ENCODE measurements at regions of chr7 and their contacts with region 1.

Region 1: DNA sequence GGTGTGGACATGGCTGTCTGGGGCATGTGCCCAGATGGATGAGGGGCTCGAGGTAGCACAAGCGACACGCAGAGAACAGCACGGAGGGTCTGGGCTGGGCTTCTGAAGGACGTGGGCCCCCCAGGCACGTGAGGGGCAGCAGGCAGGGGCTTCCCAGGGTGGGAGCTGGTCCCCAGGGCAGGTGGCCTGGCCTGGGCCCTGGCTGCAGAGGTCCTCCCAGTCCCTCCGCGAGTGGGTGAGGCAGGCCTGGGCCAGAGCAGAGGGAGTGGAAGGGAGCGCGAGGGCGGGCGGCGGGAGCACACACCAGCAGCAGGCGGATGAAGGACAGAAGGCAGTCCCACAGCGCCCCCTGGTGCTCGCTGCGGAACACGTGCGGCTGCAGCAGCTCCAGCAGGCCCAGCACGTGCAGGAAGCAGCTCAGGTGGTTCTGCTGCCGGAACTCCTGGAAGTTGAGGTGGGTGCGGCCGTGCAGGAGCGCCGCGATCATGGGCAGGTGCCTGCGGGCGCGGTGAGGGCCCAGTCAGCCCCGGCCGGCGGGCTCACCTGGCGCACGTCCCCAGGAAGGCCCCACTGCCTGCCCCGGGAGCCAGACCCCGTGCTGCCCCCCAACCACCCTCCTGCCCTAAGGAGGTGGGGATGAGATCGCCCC is 14.7 kb upstream of the MICALL2 start:
- DNase-seq: peak; percentile 64
- H3K4me3 ChIP-seq: no peak overlapping the region
- H3K27ac ChIP-seq: no peak overlapping the region
- H3K4me1 ChIP-seq: no peaks in the 10 kb centered on the region
- H3K27me3 ChIP-seq: no peaks in the 10 kb centered on the region
- CTCF ChIP-seq: peak; percentile 91 to 97
- POLR2A ChIP-seq: no peak

Region 2: DNA sequence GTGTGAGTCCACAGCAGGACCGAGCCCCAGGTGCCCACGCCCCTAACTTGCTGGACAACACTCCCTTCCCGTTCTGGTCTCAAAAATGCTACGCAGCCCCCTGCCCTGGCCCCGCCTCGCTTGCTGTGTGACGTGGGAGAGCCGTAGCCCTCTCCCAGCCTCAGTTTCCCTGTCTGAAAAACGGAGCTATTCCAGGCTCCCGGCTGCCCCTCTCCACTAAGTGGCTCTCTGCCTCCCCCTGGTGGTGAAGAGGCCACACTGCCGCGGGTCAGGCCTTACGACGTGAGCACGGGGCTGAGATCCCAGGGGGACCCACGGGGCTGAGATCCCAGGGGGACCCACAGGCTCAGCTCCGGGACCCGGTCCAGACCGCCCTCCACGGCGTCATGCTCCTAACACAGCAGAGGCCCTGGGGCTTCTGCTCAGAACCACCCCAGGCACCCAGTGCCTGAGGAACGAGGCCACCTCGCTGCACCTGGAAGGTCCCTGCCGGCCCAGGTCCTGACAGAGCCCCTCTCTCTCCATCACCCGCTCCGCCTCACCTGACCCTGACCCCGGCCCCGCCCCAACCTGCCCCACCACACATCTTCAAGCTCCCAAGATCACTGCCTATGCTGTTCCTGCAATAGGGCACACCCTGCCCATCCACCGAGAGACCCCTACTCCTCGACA is 41.4 kb before region 1 on chr7:
- CTCF ChIA-PET with region 1: interaction called, 24 read pairs
- POLR2A ChIA-PET with region 1: no interaction called
- dilution Hi-C with region 1: no loop called
- intact Hi-C with region 1: loop called (anchors 2 kb)
- DNase-seq: peak; percentile 51
- H3K4me3 ChIP-seq: no peak overlapping the region
- H3K27ac ChIP-seq: no peak overlapping the region
- H3K4me1 ChIP-seq: no peaks in the 10 kb centered on the region
- H3K27me3 ChIP-seq: no peaks in the 10 kb centered on the region
- CTCF ChIP-seq: peak; percentile 95 to 97
- POLR2A ChIP-seq: no peak

Region 3: DNA sequence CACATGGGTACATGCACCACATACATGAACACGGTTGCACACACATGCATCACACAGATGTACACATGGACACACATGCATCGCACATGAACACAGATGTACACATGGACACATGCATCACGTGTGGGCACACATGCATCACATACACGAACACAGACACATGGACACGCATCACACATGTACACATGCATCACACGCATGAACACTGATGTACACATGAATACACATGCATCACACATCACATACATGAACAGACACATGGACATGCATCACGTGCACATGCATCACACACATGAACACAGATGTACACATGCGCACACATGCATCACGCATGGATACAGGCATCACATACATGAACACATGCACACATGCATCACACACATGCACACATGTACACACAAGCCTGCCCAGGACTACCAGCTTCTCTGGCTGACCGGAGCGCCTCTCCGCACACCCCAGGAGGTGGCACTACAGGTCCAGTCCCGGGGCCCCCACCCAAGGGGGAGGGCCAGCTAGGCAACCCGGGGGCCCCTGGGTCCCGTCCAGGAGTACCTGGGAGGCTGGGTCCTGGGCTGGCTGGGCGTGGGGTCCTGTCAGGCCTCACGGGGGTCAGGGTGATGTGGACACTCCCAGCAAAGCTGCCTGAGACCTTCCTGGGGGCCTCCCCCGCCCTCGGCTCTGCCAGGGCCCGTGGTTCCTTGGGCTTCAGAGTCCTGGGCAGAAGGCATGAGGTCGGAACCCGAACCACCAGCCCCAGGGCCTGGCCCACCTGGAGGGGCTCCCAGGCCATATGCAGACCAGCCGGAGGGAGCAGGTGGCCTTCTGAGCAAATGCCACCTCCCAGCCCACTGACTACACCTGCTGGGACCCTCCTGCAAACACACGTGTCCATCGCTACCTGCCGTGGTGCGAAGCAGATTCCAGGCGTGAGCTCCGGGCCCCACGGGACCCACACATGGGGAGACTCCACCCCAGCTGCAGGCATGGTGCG is 34.3 kb before region 1 on chr7:
- CTCF ChIA-PET with region 1: interaction called, 24 read pairs
- POLR2A ChIA-PET with region 1: no interaction called
- dilution Hi-C with region 1: no loop called
- intact Hi-C with region 1: no loop called
- DNase-seq: no peak
- H3K4me3 ChIP-seq: no peak overlapping the region
- H3K27ac ChIP-seq: no peak overlapping the region
- H3K4me1 ChIP-seq: no peaks in the 10 kb centered on the region
- H3K27me3 ChIP-seq: no peaks in the 10 kb centered on the region
- CTCF ChIP-seq: no peak
- POLR2A ChIP-seq: no peak

Measured in endothelial cell of umbilical vein (primary cell).